GM10248 (cell line): ENCODE measurements at regions of chr16 and their contacts with region 1.

Region 1: DNA sequence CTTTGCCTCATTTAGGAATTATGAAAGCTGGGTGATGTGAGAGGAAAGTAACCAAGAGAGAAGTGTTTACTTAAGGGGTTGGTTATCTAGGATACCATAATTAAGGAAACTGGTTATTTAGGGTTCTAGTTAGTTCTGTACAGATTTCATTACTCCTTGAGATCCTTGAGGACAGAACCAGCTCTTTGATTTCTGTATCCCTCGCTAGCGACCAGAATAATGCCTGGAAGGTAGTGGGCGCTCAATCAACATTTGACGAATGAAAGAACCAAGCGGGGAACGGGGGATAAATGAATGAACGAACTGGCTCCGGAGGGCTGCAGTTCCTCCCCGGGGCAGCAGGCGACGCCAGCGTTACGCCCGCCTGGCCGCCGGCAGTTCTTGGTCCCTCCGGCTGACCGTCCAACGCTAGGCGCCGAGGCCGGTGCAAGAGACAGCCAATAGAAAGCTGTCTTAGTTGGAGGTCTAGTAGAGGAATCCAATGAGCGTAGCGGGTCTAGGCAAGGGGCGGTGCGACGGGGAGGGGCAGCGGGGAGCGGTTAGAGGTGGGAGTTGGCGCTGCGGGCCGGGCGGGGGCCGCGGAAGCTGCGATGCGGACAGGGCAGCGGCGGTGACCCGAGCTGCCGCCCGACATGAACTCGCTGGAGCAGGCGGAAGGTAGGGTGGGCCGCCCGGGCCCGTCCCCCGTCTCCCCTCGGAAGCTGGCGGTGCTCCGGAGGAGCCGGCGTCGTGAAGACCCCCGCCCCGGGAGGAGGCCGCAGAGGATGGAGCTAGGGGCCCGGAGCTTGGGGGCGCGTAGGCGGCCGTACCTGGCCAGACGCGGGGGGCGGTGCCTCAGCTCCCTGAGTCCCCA is at the start of gene CNEP1R1:
- DNase-seq: peak; percentile 99
- CTCF ChIP-seq: peak; percentile 100

Region 2: GRCh38 chr16:50038756-50039529 is 14.0 kb after region 1 on chr16:
- CTCF ChIA-PET with region 1: interaction called, 53 read pairs
- POLR2A ChIA-PET with region 1: no interaction called
- DNase-seq: no peak
- CTCF ChIP-seq: no peak

Region 3: GRCh38 chr16:50121721-50122445 is 97.0 kb after region 1 on chr16:
- CTCF ChIA-PET with region 1: interaction called, 13 read pairs
- POLR2A ChIA-PET with region 1: no interaction called
- DNase-seq: peak; percentile 41
- CTCF ChIP-seq: no peak

Region 4: GRCh38 chr16:50273681-50274325 is 248.9 kb after region 1 on chr16:
- CTCF ChIA-PET with region 1: interaction called, 26 read pairs
- POLR2A ChIA-PET with region 1: no interaction called
- DNase-seq: peak; percentile 88
- CTCF ChIP-seq: no peak

Region 5: DNA sequence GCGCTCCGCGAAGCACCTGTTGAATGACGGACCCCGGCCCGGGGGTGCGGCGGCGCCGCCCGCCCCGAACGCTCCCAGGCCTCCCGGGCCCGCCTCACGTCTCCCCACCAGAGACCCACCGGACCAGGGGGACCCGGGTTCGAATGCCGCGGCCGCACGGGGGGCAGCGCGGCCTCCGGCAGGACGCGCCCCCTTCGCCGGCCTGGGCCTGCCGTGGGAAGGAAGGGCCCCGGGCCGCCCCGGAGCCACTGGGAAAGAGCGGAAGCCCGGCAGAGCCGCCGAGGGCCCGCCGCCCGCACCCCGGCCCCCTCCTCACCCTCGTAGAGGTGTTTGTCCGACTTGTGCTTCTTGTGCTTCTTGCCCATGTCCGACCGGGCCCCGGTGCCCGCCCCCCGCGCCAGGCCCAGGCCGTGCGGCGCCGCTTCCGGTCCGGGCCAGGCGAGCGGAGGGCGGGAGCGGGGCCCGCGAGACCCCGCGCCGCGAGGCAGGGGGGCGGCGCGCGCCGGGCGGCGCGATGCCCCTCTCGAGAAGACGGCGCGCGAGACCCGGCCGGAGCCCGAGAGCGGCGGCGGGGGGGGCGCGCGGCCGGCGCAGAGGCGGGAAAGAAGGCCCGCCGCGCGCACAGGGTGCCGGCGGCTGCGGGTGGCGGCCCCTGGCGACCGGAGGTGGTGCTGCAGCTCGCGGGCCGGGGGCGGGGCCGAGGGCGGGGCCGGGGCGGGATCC is 343.7 kb after region 1 on chr16 and contains the start of gene BRD7:
- CTCF ChIA-PET with region 1: interaction called, 15 read pairs
- POLR2A ChIA-PET with region 1: no interaction called
- DNase-seq: peak; percentile 93
- CTCF ChIP-seq: peak; percentile 69